ENCODE measurements at regions of chr10 and their contacts with region 1.

Region 1: GRCh38 chr10:68406815-68407548 is at the start of gene RUFY2:
- DNase-seq: peak; percentile 91
- ATAC-seq: peak; percentile 93
- H3K4me3 ChIP-seq: peak within 1 kb of the TSS; percentile 79 to 94 (median 91)
- H3K4me3 Mint-ChIP-seq: peak within 1 kb of the TSS; percentile 92
- H3K27ac ChIP-seq: peak within 1 kb of the TSS; percentile 51 to 83
- H3K27ac Mint-ChIP-seq: peak within 1 kb of the TSS; percentile 89
- H3K4me1 ChIP-seq: peaks cover 6 to 9% of the 10 kb centered on the region in 2 donors
- H3K4me1 Mint-ChIP-seq: peaks cover 22% of the 10 kb centered on the region
- H3K27me3 ChIP-seq: no peaks in the 10 kb centered on the region
- H3K27me3 Mint-ChIP-seq: no peaks in the 10 kb centered on the region
- CTCF ChIP-seq: peak; percentile 73
- total RNA-seq, gene RUFY2: 38.7 and 41.6 TPM in 2 replicates

Region 2: DNA sequence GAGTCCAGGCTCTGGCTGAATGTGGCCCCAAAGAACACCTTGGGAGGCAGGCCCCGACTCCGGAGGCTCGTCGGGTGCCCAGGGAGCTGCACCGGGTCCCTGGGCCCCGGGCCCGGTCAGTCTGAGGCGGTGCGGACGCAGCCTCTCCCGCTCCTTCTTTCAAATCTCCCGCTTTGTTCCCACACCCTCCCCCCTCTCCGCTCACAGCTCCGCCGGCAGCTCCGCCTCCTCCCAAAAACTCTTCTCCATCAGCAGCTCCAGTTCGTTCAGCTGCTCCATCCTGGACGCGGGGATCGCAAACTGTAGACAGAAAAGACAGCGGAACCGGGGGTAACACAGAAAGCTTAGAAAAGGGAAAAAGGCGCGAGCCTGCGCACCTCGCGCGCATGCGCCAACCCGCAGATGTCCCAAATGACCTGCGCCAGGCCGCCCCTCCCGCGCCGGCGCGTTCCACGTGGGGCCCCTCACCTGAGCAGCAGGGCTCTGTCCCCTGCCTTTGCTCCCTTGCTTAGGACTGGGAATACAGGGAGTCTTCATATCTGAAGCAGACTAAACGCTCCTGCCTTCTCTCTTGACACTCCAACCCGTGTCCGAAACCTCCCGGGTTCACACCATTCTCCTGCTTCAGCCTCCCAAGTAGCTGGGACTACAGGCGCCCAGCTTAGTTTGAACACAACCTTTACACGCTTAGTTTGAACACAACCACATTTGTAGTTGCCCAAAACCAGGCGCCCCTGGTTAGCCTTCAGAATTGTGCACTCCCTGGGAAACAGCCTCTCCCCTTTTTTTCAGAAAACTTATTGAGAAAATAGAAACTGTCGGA is 64.8 kb after region 1 on chr10 and contains the start of gene DNA2:
- CTCF ChIA-PET with region 1: interaction called, 6 read pairs
- POLR2A ChIA-PET with region 1: no interaction called
- intact Hi-C with region 1: loop called (anchors 1 kb)
- DNase-seq: peak; percentile 86
- ATAC-seq: peak; percentile 84
- H3K4me3 ChIP-seq: peak within 1 kb of the TSS; percentile 73 to 88 (median 77)
- H3K4me3 Mint-ChIP-seq: peak within 1 kb of the TSS; percentile 100
- H3K27ac ChIP-seq: peak within 1 kb of the TSS in 1 of 2 donors; percentile 76
- H3K27ac Mint-ChIP-seq: peak within 1 kb of the TSS; percentile 92
- H3K4me1 ChIP-seq: peaks cover 5 to 12% of the 10 kb centered on the region in 2 donors
- H3K4me1 Mint-ChIP-seq: peaks cover 17% of the 10 kb centered on the region
- H3K27me3 ChIP-seq: no peaks in the 10 kb centered on the region
- H3K27me3 Mint-ChIP-seq: no peaks in the 10 kb centered on the region
- CTCF ChIP-seq: no peak
- total RNA-seq, gene DNA2: 5.6 and 6.5 TPM in 2 replicates

Region 3: DNA sequence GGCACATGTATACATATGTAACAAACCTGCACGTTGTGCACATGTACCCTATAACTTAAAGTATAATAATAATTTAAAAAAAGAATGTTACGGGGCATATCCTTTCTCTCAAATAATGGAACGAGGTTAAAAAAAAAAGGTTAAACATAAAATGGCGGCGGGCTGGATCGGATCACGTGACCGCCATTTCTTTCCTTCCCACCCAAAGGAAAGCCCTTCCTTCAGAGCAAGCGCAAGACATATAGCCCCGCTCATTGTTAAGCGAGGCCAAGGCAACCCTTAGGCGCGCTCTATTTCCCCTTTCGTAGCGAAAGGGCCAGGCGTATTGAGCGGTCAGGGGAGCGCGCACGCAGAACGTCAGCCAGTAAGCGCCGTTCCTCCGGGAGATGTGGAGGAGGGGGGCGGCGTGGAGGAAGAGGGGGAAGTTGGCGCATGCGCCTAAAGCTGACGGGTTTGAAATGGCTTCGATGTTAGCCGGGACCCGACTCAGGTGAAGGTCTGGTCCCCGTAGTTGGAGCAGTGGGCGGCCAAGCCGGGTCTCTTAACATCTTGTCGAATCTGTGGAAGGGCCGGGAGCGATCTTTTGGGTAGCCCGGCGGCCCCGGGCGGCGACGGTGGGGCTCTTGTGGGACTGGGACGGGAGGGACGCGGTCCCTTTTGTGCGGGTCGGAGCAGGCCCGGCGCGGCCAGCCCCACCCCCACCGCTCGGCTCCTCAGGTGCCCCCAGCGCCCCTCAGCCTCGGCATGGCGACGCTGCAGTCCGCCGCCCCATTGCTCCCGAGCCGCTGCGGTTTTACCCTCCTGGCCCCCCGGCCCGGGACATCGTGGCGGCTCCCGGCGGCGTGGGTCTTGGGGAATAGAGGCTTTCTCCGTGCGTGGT is 314.1 kb after region 1 on chr10 and contains the start of gene CCAR1:
- CTCF ChIA-PET with region 1: interaction called, 3 read pairs
- POLR2A ChIA-PET with region 1: no interaction called
- intact Hi-C with region 1: loop called (anchors 2 kb)
- DNase-seq: peak; percentile 99
- ATAC-seq: peak; percentile 97
- H3K4me3 ChIP-seq: peak within 1 kb of the TSS; percentile 58 to 96 (median 93)
- H3K4me3 Mint-ChIP-seq: peak within 1 kb of the TSS; percentile 96
- H3K27ac ChIP-seq: peak within 1 kb of the TSS; percentile 81 to 95
- H3K27ac Mint-ChIP-seq: peak within 1 kb of the TSS; percentile 97
- H3K4me1 ChIP-seq: peaks cover 10 to 15% of the 10 kb centered on the region in 2 donors
- H3K4me1 Mint-ChIP-seq: peaks cover 17% of the 10 kb centered on the region
- H3K27me3 ChIP-seq: no peaks in the 10 kb centered on the region
- H3K27me3 Mint-ChIP-seq: no peaks in the 10 kb centered on the region
- CTCF ChIP-seq: no peak
- total RNA-seq, gene CCAR1: 98.9 and 101 TPM in 2 replicates